HEK293 (cell line): ENCODE measurements at regions of chr11 and their contacts with region 1.

Region 1: DNA sequence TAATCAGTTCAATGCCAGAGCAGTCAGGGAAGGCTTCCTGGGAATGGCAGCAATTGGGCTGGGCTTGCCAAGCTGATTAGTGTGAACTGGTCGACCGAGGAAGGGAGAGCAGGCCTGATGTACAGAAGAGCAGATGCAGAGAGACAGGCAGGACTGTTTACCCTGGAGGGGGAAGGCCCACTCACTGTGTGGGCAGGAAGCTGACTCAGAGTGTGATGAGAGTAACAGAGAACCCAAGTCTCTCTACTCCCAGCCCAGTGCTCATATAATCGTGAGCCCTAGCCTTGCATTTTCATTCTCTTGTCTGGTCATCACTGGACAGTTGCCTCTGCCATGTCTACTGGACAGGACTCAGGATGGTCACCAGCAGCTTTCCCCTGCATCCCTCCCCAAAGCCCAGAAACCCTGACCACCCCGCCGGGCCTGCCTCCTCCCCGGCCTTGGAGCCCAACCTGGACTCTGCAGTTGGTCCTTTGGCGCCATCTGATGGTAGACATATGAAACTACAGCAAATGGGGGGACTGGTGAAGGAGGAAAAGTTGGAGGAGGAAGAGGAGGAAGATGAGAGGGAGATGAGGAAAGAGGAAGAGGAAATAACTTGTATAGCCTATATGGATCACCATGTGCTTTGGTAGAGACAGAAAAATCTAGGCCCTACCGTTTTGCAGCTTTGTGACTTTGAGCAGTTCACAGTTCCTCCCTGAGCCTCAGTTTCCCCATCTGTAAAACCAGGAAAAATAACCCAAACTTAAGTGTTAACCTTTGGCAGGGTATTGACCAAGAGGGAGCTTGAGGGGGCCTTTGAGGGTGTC is 43.4 kb upstream of the PRDM11 start:
- H3K4me3 ChIP-seq: no peak overlapping the region
- H3K27ac ChIP-seq: no peak overlapping the region
- H3K4me1 ChIP-seq: no peaks in the 10 kb centered on the region
- CTCF ChIP-seq: peak; percentile 62

Region 2: GRCh38 chr11:44920451-44920850 is 182.6 kb before region 1 on chr11:
- CTCF ChIA-PET with region 1: interaction called, 847 read pairs
- POLR2A ChIA-PET with region 1: no interaction called
- H3K4me3 ChIP-seq: no peak overlapping the region
- H3K27ac ChIP-seq: no peak overlapping the region
- H3K4me1 ChIP-seq: no peaks in the 10 kb centered on the region
- CTCF ChIP-seq: no peak

Region 3: DNA sequence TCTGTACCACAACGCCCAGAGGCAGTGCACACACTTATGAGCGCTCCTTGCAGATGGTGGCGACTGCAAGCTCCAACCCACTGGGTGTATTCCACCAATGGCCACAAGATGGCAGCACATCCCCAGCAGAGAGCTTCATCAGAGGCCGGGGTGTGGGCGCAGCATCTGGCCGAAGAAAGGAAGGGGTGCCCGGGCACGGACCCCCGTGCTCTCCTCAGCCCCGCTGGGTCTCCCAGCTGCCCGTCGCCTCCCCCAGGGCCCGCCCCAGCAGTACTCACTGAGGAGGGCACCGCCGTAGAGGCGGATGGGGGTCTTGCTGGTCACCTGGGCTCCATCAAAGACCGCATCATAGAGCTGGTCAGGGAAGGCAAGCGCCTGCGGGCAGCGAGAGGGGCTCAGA is 166.5 kb before region 1 on chr11:
- CTCF ChIA-PET with region 1: interaction called, 847 read pairs
- POLR2A ChIA-PET with region 1: interaction called, 10 read pairs
- H3K4me3 ChIP-seq: no peak overlapping the region
- H3K27ac ChIP-seq: no peak overlapping the region
- H3K4me1 ChIP-seq: no peaks in the 10 kb centered on the region
- CTCF ChIP-seq: peak; percentile 77

Region 4: GRCh38 chr11:44949160-44950030 is 153.6 kb before region 1 on chr11:
- CTCF ChIA-PET with region 1: interaction called, 31 read pairs
- POLR2A ChIA-PET with region 1: no interaction called
- H3K4me3 ChIP-seq: peak overlapping the region; percentile 71
- H3K27ac ChIP-seq: no peak overlapping the region; the same call in 1 of the 2 replicates
- H3K4me1 ChIP-seq: no peaks in the 10 kb centered on the region
- CTCF ChIP-seq: no peak

Region 5: GRCh38 chr11:44955015-44955738 is 147.8 kb before region 1 on chr11:
- CTCF ChIA-PET with region 1: interaction called, 10 read pairs
- POLR2A ChIA-PET with region 1: no interaction called
- H3K4me3 ChIP-seq: no peak overlapping the region
- H3K27ac ChIP-seq: no peak overlapping the region
- H3K4me1 ChIP-seq: no peaks in the 10 kb centered on the region
- CTCF ChIP-seq: no peak

Region 6: DNA sequence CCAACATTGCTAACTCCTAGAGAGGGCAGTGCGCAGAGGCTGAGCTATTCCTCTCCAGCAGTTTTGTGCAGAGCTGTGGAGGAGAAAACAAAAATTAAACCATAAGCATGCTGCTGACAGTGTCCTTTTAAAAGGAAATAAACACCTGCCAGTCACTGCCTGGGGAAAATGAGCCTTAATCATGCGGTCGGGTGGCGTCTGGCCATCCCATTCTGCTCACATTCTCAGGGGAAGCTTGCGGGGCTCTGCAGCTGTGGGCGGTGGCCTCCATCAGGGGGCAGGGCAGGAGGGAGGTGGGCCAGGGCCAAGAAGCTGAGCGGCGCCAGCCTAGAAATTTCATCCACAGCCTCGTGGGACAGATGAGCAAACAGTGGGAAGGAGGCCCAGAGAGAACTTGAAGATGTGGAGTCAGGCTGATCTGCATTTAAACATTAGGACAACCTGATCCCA is 81.3 kb before region 1 on chr11:
- CTCF ChIA-PET with region 1: interaction called, 14 read pairs
- POLR2A ChIA-PET with region 1: no interaction called
- H3K4me3 ChIP-seq: no peak overlapping the region
- H3K27ac ChIP-seq: no peak overlapping the region
- H3K4me1 ChIP-seq: no peaks in the 10 kb centered on the region; the same call in 1 of the 2 replicates
- CTCF ChIP-seq: no peak

Region 7: DNA sequence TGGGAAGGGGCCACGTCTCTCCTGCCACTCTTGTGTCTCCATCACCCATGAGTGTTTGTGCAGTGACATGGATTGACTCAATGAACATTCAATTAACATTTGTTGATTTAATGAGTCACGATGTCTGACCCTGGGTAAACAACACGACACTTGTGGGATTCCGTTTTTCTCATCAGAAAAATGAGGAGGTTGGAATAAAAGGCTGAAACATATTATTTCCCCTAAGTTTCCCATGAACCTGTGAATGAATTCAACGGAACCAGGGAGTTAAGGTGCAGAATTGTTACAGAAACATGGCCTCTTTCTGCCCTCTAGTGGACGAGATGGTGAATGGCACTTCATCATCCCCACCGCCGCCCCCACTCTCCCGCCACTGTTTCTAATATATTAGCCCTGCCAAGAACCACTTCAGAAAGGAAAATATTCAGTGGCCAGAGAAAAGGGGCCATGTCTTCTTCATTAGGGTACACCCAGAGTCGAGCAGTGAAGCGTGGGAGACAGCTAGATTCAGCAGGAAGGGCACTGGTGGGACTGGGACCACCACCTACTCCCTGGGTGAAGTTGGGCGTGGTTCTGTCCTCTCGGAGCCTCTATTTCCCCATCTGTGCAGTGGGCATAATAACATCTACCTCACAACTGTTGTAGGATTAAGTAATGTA is 229.4 kb after region 1 on chr11:
- CTCF ChIA-PET with region 1: interaction called, 147 read pairs
- POLR2A ChIA-PET with region 1: no interaction called
- H3K4me3 ChIP-seq: no peak overlapping the region
- H3K27ac ChIP-seq: no peak overlapping the region
- H3K4me1 ChIP-seq: no peaks in the 10 kb centered on the region
- CTCF ChIP-seq: no peak

Region 8: DNA sequence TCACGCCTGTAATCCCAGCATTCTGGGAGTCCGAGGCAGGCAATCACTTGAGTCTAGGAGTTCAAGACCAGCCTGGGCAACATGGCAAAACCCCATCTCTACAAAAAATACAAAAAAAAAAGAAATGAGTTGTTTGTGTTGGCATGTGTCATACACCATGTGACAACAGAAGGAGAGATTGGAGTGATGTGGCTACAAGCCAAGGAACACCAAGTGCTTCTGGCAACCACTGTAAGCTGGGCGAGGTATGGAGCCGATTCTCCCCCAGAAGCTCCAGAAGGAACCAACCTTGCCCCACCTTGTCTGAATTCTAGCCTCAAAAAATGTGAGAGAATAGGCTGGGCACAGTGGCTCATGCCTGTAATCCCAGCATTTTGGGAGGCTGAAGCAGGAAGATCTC is 662.8 kb after region 1 on chr11:
- CTCF ChIA-PET with region 1: no interaction called
- POLR2A ChIA-PET with region 1: no interaction called
- H3K4me3 ChIP-seq: no peak overlapping the region
- H3K27ac ChIP-seq: no peak overlapping the region
- H3K4me1 ChIP-seq: no peaks in the 10 kb centered on the region
- CTCF ChIP-seq: no peak